B cell (primary cell): ENCODE measurements at regions of chr6 and their contacts with region 1.

Region 1: GRCh38 chr6:43608310-43608763 is 20.7 kb downstream of the GTPBP2 start:
- DNase-seq: peak; percentile 70
- ATAC-seq: peak; percentile 49
- H3K4me3 ChIP-seq: no peak overlapping the region
- H3K4me3 Mint-ChIP-seq: no peak overlapping the region
- H3K27ac ChIP-seq: peak overlapping the region in 1 of 2 donors; percentile 55
- H3K27ac Mint-ChIP-seq: no peak overlapping the region
- H3K4me1 ChIP-seq: peaks cover 10 to 11% of the 10 kb centered on the region in 2 donors
- H3K4me1 Mint-ChIP-seq: peaks cover 12% of the 10 kb centered on the region
- H3K27me3 ChIP-seq: no peaks in the 10 kb centered on the region
- H3K27me3 Mint-ChIP-seq: no peaks in the 10 kb centered on the region
- CTCF ChIP-seq: peak; percentile 86

Region 2: GRCh38 chr6:41859356-41859755 is 1749.0 kb before region 1 on chr6:
- CTCF ChIA-PET with region 1: no interaction called
- POLR2A ChIA-PET with region 1: no interaction called
- intact Hi-C with region 1: no loop called
- DNase-seq: no peak
- ATAC-seq: no peak
- H3K4me3 ChIP-seq: no peak overlapping the region
- H3K4me3 Mint-ChIP-seq: no peak overlapping the region
- H3K27ac ChIP-seq: no peak overlapping the region
- H3K27ac Mint-ChIP-seq: no peak overlapping the region
- H3K4me1 ChIP-seq: no peaks in the 10 kb centered on the region
- H3K4me1 Mint-ChIP-seq: no peaks in the 10 kb centered on the region
- H3K27me3 ChIP-seq: no peaks in the 10 kb centered on the region
- H3K27me3 Mint-ChIP-seq: no peaks in the 10 kb centered on the region
- CTCF ChIP-seq: no peak

Region 3: DNA sequence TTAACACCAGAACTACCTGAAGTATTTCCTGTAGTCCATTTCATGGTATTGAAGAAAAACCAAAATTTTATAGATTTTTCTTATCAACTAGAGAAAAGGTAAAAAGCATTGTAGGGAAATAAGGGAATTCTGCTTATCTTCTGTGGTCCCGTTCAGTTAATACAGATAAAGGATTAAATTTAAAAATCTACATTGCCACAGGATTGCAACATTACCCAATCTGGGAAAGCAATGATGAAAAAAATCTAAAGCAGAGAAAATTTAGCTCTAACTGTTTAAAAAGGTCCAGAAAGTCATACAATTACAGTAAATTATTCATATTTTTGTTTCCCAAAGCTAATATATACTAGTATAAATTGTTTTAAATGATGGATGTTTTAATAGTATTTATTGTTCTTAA is 14.4 kb before region 1 on chr6:
- CTCF ChIA-PET with region 1: interaction called, 13 read pairs
- POLR2A ChIA-PET with region 1: interaction called, 8 read pairs
- intact Hi-C with region 1: no loop called
- DNase-seq: no peak
- ATAC-seq: no peak
- H3K4me3 ChIP-seq: no peak overlapping the region
- H3K4me3 Mint-ChIP-seq: no peak overlapping the region
- H3K27ac ChIP-seq: no peak overlapping the region
- H3K27ac Mint-ChIP-seq: no peak overlapping the region
- H3K4me1 ChIP-seq: no peaks in the 10 kb centered on the region
- H3K4me1 Mint-ChIP-seq: no peaks in the 10 kb centered on the region
- H3K27me3 ChIP-seq: no peaks in the 10 kb centered on the region
- H3K27me3 Mint-ChIP-seq: no peaks in the 10 kb centered on the region
- CTCF ChIP-seq: no peak

Region 4: GRCh38 chr6:43621429-43622180 is 13.3 kb after region 1 on chr6:
- CTCF ChIA-PET with region 1: interaction called, 20 read pairs
- POLR2A ChIA-PET with region 1: no interaction called
- intact Hi-C with region 1: no loop called
- DNase-seq: no peak
- ATAC-seq: no peak
- H3K4me3 ChIP-seq: no peak overlapping the region
- H3K4me3 Mint-ChIP-seq: no peak overlapping the region
- H3K27ac ChIP-seq: no peak overlapping the region
- H3K27ac Mint-ChIP-seq: no peak overlapping the region
- H3K4me1 ChIP-seq: peaks cover 3 to 4% of the 10 kb centered on the region in 2 donors
- H3K4me1 Mint-ChIP-seq: peaks cover 6% of the 10 kb centered on the region
- H3K27me3 ChIP-seq: no peaks in the 10 kb centered on the region
- H3K27me3 Mint-ChIP-seq: no peaks in the 10 kb centered on the region
- CTCF ChIP-seq: no peak

Region 5: GRCh38 chr6:43774776-43775534 is 166.6 kb after region 1 on chr6:
- CTCF ChIA-PET with region 1: interaction called, 4 read pairs
- POLR2A ChIA-PET with region 1: interaction called, 11 read pairs
- intact Hi-C with region 1: no loop called
- DNase-seq: peak; percentile 78
- ATAC-seq: peak; percentile 22
- H3K4me3 ChIP-seq: no peak overlapping the region
- H3K4me3 Mint-ChIP-seq: peak overlapping the region; percentile 19
- H3K27ac ChIP-seq: no peak overlapping the region
- H3K27ac Mint-ChIP-seq: no peak overlapping the region
- H3K4me1 ChIP-seq: peaks cover 21 to 31% of the 10 kb centered on the region in 2 donors
- H3K4me1 Mint-ChIP-seq: peaks cover 35% of the 10 kb centered on the region
- H3K27me3 ChIP-seq: peaks cover 0 to 36% (median 15%) of the 10 kb centered on the region in 4 experiments
- H3K27me3 Mint-ChIP-seq: peaks cover 19% of the 10 kb centered on the region
- CTCF ChIP-seq: peak; percentile 84